AG04450 (cell line): ENCODE measurements at regions of chr6 and their contacts with region 1.

Region 1: DNA sequence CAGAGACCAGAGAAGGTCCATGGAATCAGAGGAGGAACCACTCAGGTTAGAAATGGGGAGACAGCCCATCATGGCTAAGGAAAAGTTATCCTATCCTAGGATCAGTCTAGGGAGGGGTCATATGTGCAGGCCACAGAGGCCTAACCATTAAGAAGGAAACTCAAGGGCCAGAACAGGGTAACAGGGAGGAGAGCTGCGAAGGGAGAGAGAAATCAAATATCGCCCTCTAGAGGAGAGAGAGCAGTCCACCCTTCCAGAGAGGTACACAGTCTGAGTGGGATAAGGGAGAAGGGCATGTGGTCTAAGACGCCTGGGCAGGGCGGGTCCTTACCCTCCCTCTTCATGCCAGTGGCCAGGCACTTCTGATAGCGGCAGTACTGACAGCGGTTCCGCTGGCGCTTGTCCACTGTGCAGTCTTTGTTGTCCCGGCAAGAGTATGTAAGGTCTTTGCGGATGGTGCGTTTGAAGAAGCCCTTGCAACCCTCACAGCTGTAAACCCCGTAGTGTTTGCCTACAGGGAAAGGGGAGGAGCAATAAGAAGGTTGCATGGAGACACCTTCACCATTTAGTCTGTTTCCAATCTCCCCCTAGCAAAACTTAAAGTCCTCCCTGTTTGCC is 2.9 kb downstream of the RXRB start:
- DNase-seq: no peak
- H3K4me3 ChIP-seq: no peak overlapping the region
- H3K27ac ChIP-seq: peak overlapping the region; percentile 31
- H3K27me3 ChIP-seq: peaks cover 4% of the 10 kb centered on the region
- CTCF ChIP-seq: peak; percentile 76

Region 2: GRCh38 chr6:33208091-33208967 is 10.8 kb after region 1 on chr6 and contains the start of gene RING1:
- CTCF ChIA-PET with region 1: interaction called, 17 read pairs
- POLR2A ChIA-PET with region 1: interaction called, 9 read pairs
- DNase-seq: no peak
- H3K4me3 ChIP-seq: peak within 1 kb of the TSS; percentile 78
- H3K27ac ChIP-seq: peak within 1 kb of the TSS; percentile 91
- H3K27me3 ChIP-seq: no peaks in the 10 kb centered on the region
- CTCF ChIP-seq: no peak
- polyA plus RNA-seq, gene RING1: 23.8 and 26.8 TPM in 2 replicates